ENCODE measurements at regions of chr7 and their contacts with region 1.

Region 1: DNA sequence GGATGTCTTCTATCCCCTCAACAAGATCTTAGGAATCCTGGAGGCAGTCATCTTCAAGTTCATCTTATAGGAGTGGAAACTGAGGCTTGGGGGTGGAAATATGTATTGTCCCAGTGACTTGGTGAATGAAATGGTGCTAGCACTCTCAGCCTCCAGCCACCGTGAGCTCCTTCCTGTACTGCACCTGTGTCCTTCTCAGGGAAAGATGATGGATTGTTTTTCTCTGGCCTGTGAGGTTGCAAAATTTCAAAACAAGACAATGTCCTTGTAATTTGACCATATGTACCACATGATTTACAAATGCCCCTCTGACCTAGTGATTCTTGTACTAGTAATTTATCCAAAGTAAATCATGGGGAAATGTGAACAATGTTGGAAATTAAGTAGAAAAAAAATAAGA is 71.0 kb upstream of the CHCHD3 start:
- DNase-seq: no peak
- H3K4me3 ChIP-seq: no peak overlapping the region
- H3K27ac ChIP-seq: no peak overlapping the region
- H3K4me1 ChIP-seq: no peaks in the 10 kb centered on the region; a peak in 2 of 7 replicates
- H3K27me3 ChIP-seq: no peaks in the 10 kb centered on the region
- CTCF ChIP-seq: no peak
- EP300 ChIP-seq: no peak
- POLR2A ChIP-seq: no peak
- RAD21 ChIP-seq: no peak

Region 2: GRCh38 chr7:133139350-133139749 is 13.5 kb before region 1 on chr7:
- CTCF ChIA-PET with region 1: interaction called, 11 read pairs
- POLR2A ChIA-PET with region 1: no interaction called
- DNase-seq: peak; percentile 21 to 81
- H3K4me3 ChIP-seq: no peak overlapping the region
- H3K27ac ChIP-seq: no peak overlapping the region
- H3K4me1 ChIP-seq: no peaks in the 10 kb centered on the region
- H3K27me3 ChIP-seq: no peaks in the 10 kb centered on the region
- CTCF ChIP-seq: peak; percentile 26 to 85 (median 58)
- EP300 ChIP-seq: no peak
- POLR2A ChIP-seq: no peak
- RAD21 ChIP-seq: peak; percentile 68 to 80